Ovary (tissue), 10 donors: ENCODE measurements at regions of chr9 and their contacts with region 1.

Region 1: DNA sequence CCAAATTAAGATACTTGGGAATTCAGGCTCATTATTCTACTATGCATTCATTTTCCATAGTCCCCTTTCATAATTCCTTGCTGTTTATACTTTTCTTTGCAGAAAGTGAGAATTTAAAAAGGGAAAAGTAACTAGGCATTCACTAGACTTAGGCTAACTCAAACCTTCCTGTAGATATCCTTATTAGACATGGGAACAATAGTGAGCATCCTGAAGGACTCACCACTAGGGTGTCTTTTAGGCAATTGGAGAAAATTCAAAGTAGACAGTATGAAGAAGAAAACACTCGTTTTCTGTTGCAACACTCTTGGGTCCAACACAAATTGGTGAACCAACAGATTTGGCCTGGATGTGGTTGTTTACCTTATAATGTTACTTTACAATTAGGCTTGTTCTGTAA is 213.2 kb upstream of the GRIN3A start:
- DNase-seq: no peak
- H3K4me3 ChIP-seq: no peak overlapping the region
- H3K27ac ChIP-seq: no peak overlapping the region
- H3K4me1 ChIP-seq: no peaks in the 10 kb centered on the region
- H3K27me3 ChIP-seq: no peaks in the 10 kb centered on the region
- CTCF ChIP-seq: no peak
- EP300 ChIP-seq: no peak
- POLR2A ChIP-seq: no peak

Region 2: GRCh38 chr9:101893661-101894646 is 57.6 kb before region 1 on chr9:
- intact Hi-C with region 1: loop called in 1 of 4 experiments (anchors 2 kb)
- DNase-seq: no peak
- H3K4me3 ChIP-seq: no peak overlapping the region
- H3K27ac ChIP-seq: no peak overlapping the region
- H3K4me1 ChIP-seq: no peaks in the 10 kb centered on the region
- H3K27me3 ChIP-seq: no peaks in the 10 kb centered on the region
- CTCF ChIP-seq: no peak
- EP300 ChIP-seq: no peak
- POLR2A ChIP-seq: no peak